Activated CD8-positive, alpha-beta T cell treated with anti-CD3 and anti-CD28 coated beads, Interleukin-2, amount 10 ng/mL, durations not matched to agents 7 days and 5 days (primary cell): ENCODE measurements at regions of chr10 and their contacts with region 1.

Region 1: DNA sequence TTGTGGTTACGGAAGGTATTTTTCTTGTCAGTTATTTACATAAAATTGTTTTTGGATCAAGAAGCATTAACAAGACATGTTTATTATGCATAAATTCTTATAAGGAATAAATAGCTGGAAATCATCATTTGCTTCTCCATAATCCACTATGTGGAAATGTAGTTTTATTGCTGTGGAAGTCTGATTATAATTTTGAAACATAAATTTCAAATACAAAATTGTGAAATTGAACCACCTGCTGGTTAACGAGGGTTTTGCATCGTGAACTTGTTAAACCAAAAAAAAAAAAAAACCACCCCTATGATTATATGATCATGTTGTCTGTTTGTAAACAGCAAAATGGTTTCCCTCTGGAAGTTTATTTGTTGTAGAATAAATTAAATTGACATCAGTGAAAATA is 25.9 kb downstream of the ABRAXAS2 start:
- DNase-seq: peak; percentile 26
- ATAC-seq: no peak
- H3K4me3 Mint-ChIP-seq: no peak overlapping the region
- H3K27ac Mint-ChIP-seq: no peak overlapping the region
- H3K4me1 Mint-ChIP-seq: no peaks in the 10 kb centered on the region
- H3K27me3 Mint-ChIP-seq: no peaks in the 10 kb centered on the region

Region 2: GRCh38 chr10:124530215-124530665 is 297.2 kb before region 1 on chr10:
- CTCF ChIA-PET with region 1: interaction called, 22 read pairs
- POLR2A ChIA-PET with region 1: no interaction called
- DNase-seq: peak; percentile 89
- ATAC-seq: peak; percentile 97
- H3K4me3 Mint-ChIP-seq: no peak overlapping the region
- H3K27ac Mint-ChIP-seq: no peak overlapping the region
- H3K4me1 Mint-ChIP-seq: peaks cover 12% of the 10 kb centered on the region
- H3K27me3 Mint-ChIP-seq: no peaks in the 10 kb centered on the region

Region 3: GRCh38 chr10:124671486-124672075 is 155.9 kb before region 1 on chr10:
- CTCF ChIA-PET with region 1: no interaction called
- POLR2A ChIA-PET with region 1: no interaction called
- DNase-seq: no peak
- ATAC-seq: no peak
- H3K4me3 Mint-ChIP-seq: no peak overlapping the region
- H3K27ac Mint-ChIP-seq: peak overlapping the region; percentile 65
- H3K4me1 Mint-ChIP-seq: peaks cover 42% of the 10 kb centered on the region
- H3K27me3 Mint-ChIP-seq: no peaks in the 10 kb centered on the region

Region 4: GRCh38 chr10:124748166-124748565 is 79.3 kb before region 1 on chr10:
- CTCF ChIA-PET with region 1: interaction called, 11 read pairs
- POLR2A ChIA-PET with region 1: no interaction called
- DNase-seq: no peak
- ATAC-seq: no peak
- H3K4me3 Mint-ChIP-seq: no peak overlapping the region
- H3K27ac Mint-ChIP-seq: no peak overlapping the region
- H3K4me1 Mint-ChIP-seq: peaks cover 23% of the 10 kb centered on the region
- H3K27me3 Mint-ChIP-seq: no peaks in the 10 kb centered on the region

Region 5: DNA sequence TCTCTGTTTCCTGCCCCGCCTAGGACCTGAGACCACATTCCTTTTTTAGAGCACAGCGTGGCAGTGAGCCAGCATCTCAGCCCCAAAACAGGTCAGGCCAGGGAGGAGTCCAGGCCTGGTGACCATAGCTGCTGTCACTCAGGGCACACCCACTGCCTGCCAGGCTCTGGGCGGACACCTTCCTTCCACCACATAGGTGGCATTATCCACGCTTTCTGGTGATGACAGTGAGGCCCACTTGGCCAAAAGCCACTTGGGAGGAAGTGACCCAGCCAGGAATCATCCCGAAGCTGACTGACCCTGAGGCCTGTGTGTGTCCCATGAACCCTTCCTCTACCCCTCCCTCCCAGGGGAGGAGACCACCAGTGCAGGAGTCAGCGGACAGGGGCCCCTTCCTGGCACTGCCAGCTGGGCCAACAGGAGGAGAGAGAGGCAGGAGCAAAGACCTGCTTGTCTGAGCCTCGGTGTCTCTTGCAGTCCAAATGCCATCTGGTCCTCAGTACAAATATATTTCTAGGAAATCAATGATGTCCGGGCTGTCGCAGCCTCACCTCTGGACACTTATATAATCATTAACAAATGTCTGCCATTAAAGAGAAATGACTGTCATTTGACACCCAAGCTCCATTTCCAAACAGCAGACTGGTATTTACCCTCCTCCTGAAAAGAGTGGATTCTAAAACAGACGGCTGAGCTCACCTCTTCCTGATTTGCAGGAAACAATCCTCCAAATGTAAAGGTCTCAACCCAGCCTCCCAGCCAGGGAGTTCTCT is 37.1 kb after region 1 on chr10:
- CTCF ChIA-PET with region 1: no interaction called
- POLR2A ChIA-PET with region 1: no interaction called
- DNase-seq: no peak
- ATAC-seq: no peak
- H3K4me3 Mint-ChIP-seq: no peak overlapping the region
- H3K27ac Mint-ChIP-seq: no peak overlapping the region
- H3K4me1 Mint-ChIP-seq: no peaks in the 10 kb centered on the region
- H3K27me3 Mint-ChIP-seq: peaks cover 2% of the 10 kb centered on the region